ENCODE measurements at regions of chr15 and their contacts with region 1.

Region 1: GRCh38 chr15:51737280-51738017 is at the start of gene LYSMD2:
- DNase-seq: peak; percentile 51 to 84 (median 68)
- ATAC-seq: peak; percentile 70 to 72
- H3K4me3 Mint-ChIP-seq: peak within 1 kb of the TSS; percentile 83 to 97 (median 92)
- H3K27ac Mint-ChIP-seq: peak within 1 kb of the TSS; percentile 93 to 99 (median 97)
- H3K4me1 Mint-ChIP-seq: peaks cover 30 to 57% (median 55%) of the 10 kb centered on the region in 4 donors
- H3K27me3 Mint-ChIP-seq: no peaks in the 10 kb centered on the region
- polyA plus RNA-seq, gene LYSMD2: 29.6 to 53.7 (median 35.8) TPM

Region 2: GRCh38 chr15:51649659-51650521 is 87.6 kb before region 1 on chr15:
- POLR2A ChIA-PET with region 1: interaction called, 12 read pairs
- DNase-seq: peak in 9 of 10 donors; percentile 24 to 76 (median 55)
- ATAC-seq: peak; percentile 86 to 89
- H3K4me3 Mint-ChIP-seq: no peak overlapping the region
- H3K27ac Mint-ChIP-seq: no peak overlapping the region
- H3K4me1 Mint-ChIP-seq: no peaks in the 10 kb centered on the region
- H3K27me3 Mint-ChIP-seq: peaks cover 0 to 4% (median 0%) of the 10 kb centered on the region in 5 donors

Region 3: DNA sequence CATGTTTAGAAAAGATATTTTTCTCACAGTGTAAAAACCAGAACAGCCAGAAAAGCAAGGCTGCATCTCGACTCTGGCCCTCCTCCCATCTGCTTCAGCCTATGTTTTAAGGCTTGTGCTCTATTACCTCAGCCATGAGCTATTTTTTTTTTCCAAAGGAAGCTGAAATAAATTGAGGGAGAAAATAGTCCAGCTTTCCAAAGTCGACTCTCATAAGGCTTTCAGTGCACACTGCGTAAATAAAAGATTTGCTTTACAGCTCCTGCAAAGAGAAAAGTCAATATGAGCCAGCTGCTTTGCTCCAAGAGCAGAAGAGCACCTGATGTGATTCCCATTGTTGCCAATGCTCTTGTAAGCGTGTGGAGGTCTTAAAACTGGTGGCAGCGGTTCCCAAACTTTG is 29.4 kb before region 1 on chr15:
- POLR2A ChIA-PET with region 1: no interaction called
- DNase-seq: no peak
- ATAC-seq: no peak
- H3K4me3 Mint-ChIP-seq: no peak overlapping the region
- H3K27ac Mint-ChIP-seq: no peak overlapping the region
- H3K4me1 Mint-ChIP-seq: no peaks in the 10 kb centered on the region
- H3K27me3 Mint-ChIP-seq: peaks cover 0 to 4% (median 2%) of the 10 kb centered on the region in 5 donors

Region 4: DNA sequence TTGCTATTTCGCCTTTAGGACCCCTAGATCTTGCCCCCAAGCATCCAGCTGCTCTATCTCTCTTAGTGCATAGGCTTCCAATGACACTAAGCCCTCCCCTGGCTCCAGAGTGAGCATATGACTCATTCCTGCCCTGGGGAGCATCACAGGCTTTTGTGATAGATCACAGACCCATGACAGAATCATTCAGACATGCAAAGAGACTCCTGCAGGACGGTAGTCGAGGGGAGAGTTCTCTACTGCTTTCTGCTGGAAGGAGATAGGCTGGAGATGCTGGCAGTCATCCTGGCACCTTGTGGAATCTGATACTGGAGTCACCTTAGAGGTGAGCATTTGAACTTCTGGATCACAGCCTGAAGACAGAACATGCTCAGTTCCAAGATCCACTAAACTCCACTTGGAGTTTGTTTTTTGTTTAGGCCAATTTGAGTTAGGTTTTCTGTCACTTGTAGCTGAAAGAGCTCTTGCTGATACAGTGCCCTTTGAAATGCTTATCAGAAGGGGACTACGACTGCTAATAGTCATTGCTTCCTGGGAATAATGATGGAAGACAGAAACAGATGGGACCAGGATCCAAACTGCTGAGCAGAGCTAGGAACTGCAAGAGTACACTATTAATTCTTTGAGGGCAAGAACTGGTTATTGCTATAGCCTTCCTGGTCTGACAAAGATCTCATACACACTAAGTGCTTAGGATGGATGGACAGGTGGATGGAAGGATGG is 10.9 kb before region 1 on chr15:
- POLR2A ChIA-PET with region 1: interaction called, 17 read pairs
- DNase-seq: peak in 1 of 10 donors; percentile 31
- ATAC-seq: peak in 1 of 2 donors; percentile 82
- H3K4me3 Mint-ChIP-seq: peak overlapping the region in 6 of 10 donors; percentile 9 to 56 (median 42)
- H3K27ac Mint-ChIP-seq: peak overlapping the region; percentile 40 to 84 (median 75)
- H3K4me1 Mint-ChIP-seq: peaks cover 30 to 77% (median 73%) of the 10 kb centered on the region in 4 donors
- H3K27me3 Mint-ChIP-seq: no peaks in the 10 kb centered on the region

Region 5: GRCh38 chr15:51750792-51751685 is 13.6 kb after region 1 on chr15 and contains the start of gene TMOD2:
- POLR2A ChIA-PET with region 1: interaction called, 68 read pairs
- DNase-seq: peak; percentile 11 to 71 (median 44)
- ATAC-seq: peak; percentile 89 to 91
- H3K4me3 Mint-ChIP-seq: peak within 1 kb of the TSS; percentile 83 to 94 (median 92)
- H3K27ac Mint-ChIP-seq: peak within 1 kb of the TSS; percentile 22 to 86 (median 73)
- H3K4me1 Mint-ChIP-seq: peaks cover 27 to 55% (median 46%) of the 10 kb centered on the region in 4 donors
- H3K27me3 Mint-ChIP-seq: peaks cover 0 to 3% (median 0%) of the 10 kb centered on the region in 5 donors
- polyA plus RNA-seq, gene TMOD2: 2.9 to 4.4 (median 3.5) TPM

Region 6: GRCh38 chr15:51756482-51756881 is 19.0 kb after region 1 on chr15:
- POLR2A ChIA-PET with region 1: interaction called, 68 read pairs
- DNase-seq: no peak
- ATAC-seq: no peak
- H3K4me3 Mint-ChIP-seq: no peak overlapping the region
- H3K27ac Mint-ChIP-seq: no peak overlapping the region
- H3K4me1 Mint-ChIP-seq: peaks cover 29 to 45% (median 41%) of the 10 kb centered on the region in 4 donors
- H3K27me3 Mint-ChIP-seq: no peaks in the 10 kb centered on the region

Region 7: DNA sequence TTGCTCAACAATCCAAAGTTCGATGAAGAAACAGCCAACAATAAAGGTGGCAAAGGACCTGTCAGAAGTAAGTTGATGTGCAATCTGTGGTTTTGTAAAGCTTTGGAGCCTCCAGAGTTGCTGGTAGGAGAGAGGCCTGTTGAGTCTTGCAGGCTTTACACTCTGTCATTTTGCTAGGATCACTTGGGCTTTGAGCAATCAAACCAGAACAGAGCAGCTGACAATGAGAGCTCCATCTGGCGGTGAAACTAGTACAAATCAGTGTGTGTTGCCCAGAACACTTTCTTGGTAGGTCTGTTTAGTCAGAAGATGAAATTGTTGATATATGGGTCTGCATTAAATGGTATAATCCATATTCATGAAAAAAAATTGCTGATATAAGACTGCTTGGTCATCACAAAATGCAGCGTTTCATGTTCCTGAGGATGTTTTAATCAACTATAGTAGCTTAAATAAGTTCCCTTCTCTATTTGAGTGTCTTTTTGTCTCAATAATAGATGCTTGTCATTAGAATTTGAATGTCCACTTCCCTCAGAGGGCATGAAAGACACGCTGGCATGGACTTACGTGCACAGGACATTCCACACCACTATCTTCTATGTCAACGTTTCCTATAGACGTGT is 39.6 kb after region 1 on chr15:
- POLR2A ChIA-PET with region 1: interaction called, 11 read pairs
- DNase-seq: peak; percentile 18 to 79 (median 58)
- ATAC-seq: peak; percentile 81 to 83
- H3K4me3 Mint-ChIP-seq: no peak overlapping the region
- H3K27ac Mint-ChIP-seq: no peak overlapping the region
- H3K4me1 Mint-ChIP-seq: peaks cover 0 to 11% (median 8%) of the 10 kb centered on the region in 4 donors
- H3K27me3 Mint-ChIP-seq: no peaks in the 10 kb centered on the region

Region 8: DNA sequence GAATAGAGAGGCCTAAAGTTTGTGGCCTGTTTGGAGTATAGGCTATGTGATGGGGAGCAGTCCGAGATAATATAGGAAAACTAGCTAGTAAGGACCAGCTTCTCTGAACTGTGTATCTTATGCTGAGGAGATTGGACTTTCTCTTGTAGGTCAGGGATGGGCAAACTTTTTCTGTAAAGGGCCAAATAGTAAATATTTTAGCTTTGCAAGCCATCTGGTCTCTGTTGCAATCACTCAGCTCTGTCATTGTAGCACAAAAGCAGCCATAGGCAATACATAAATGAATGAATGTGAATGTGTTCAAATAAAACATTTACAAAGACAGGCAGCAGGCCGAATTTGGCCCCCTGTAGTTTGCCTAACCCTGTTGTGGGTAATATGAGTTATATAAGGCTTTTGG is 116.5 kb after region 1 on chr15:
- POLR2A ChIA-PET with region 1: no interaction called
- DNase-seq: no peak
- ATAC-seq: no peak
- H3K4me3 Mint-ChIP-seq: no peak overlapping the region
- H3K27ac Mint-ChIP-seq: no peak overlapping the region
- H3K4me1 Mint-ChIP-seq: peaks cover 45 to 75% (median 61%) of the 10 kb centered on the region in 4 donors
- H3K27me3 Mint-ChIP-seq: no peaks in the 10 kb centered on the region

Measured in naive thymus-derived CD8-positive, alpha-beta T cell (primary cell).